Panc1 (cell line): ENCODE measurements at regions of chr1 and their contacts with region 1.

Region 1: GRCh38 chr1:65572701-65573421 is 152.4 kb downstream of the LEPR start:
- DNase-seq: no peak
- ATAC-seq: no peak
- H3K4me3 ChIP-seq: no peak overlapping the region
- H3K27ac ChIP-seq: no peak overlapping the region
- H3K4me1 ChIP-seq: no peaks in the 10 kb centered on the region
- H3K27me3 ChIP-seq: no peaks in the 10 kb centered on the region
- CTCF ChIP-seq: no peak

Region 2: GRCh38 chr1:65554829-65555228 is 18.0 kb before region 1 on chr1:
- CTCF ChIA-PET with region 1: no interaction called
- POLR2A ChIA-PET with region 1: interaction called, 11 read pairs
- in situ Hi-C with region 1: no loop called
- intact Hi-C with region 1: no loop called
- DNase-seq: no peak
- ATAC-seq: no peak
- H3K4me3 ChIP-seq: no peak overlapping the region
- H3K27ac ChIP-seq: no peak overlapping the region
- H3K4me1 ChIP-seq: no peaks in the 10 kb centered on the region
- H3K27me3 ChIP-seq: no peaks in the 10 kb centered on the region
- CTCF ChIP-seq: no peak

Region 3: GRCh38 chr1:65596768-65597167 is 23.9 kb after region 1 on chr1:
- CTCF ChIA-PET with region 1: interaction called, 11 read pairs
- POLR2A ChIA-PET with region 1: no interaction called
- in situ Hi-C with region 1: no loop called
- intact Hi-C with region 1: no loop called
- DNase-seq: no peak
- ATAC-seq: no peak
- H3K4me3 ChIP-seq: no peak overlapping the region
- H3K27ac ChIP-seq: no peak overlapping the region
- H3K4me1 ChIP-seq: no peaks in the 10 kb centered on the region
- H3K27me3 ChIP-seq: no peaks in the 10 kb centered on the region
- CTCF ChIP-seq: no peak